PC-9 (cell line): ENCODE measurements at regions of chr4 and their contacts with region 1.

Region 1: DNA sequence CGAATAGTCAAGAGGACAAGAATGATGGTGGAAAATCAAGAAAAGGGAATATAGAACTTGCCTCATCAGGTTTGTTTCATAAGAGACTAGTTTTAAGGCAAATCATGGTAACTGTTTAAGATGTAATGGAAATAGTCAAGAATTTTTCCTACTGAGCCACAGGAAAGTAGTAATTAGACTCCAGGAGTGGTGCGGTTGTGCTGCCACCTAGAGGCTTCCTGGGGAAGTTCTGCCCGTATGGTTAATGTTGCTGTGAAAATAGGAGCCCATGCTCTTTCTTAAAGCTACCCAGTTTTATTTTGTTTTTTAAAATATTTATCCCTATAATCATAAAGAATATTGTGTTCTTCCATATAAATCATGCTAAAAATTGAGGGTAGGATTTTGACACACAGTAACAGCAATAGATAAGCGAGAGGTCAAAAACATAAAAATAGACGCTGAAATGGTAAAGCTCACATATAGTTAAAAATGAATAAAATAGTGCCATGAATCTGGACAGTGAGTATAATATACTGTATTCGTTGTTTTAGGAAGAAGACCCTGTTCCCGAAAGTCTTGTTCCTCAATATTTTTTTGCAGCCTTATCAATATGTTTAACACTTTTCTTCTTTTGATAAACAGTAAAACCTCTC is 87.0 kb downstream of the PHOX2B start:
- DNase-seq: peak in 1 of 2 experiments; percentile 63
- H3K4me3 ChIP-seq: no peak overlapping the region
- H3K27ac ChIP-seq: peak overlapping the region; percentile 31
- H3K4me1 ChIP-seq: peaks cover 25% of the 10 kb centered on the region
- H3K27me3 ChIP-seq: no peaks in the 10 kb centered on the region
- CTCF ChIP-seq: peak; percentile 92

Region 2: DNA sequence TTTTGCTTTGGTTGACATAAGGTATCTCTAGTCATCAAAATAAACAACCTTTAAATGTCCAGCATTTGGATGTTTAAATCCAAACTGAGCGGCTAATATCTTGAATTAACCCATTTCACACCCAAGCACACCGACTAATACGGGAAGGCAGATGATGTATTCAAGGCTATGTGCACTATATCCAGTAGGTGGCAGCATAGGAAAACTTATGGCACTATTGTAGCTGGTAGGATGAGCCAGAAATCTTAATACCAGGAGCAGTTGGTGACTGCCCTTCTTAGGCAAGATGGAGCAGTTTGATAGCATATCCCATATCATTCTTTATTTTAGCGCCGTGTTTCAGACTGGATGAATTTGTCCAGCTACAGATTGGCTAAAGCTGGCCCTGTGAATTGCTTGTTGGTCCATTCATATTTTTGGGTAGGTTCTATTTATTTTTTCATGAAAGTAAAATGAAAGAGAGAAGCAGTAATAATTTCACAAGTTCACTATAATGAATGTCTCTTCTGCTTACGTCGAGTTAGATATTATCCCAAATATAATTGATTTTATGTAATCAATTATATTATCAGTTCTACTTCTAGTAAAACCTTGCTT is 380.4 kb before region 1 on chr4:
- CTCF ChIA-PET with region 1: interaction called, 3 read pairs
- POLR2A ChIA-PET with region 1: interaction called, 3 read pairs
- intact Hi-C with region 1: loop called (anchors 1 kb)
- DNase-seq: peak; percentile 48 to 72
- H3K4me3 ChIP-seq: no peak overlapping the region
- H3K27ac ChIP-seq: no peak overlapping the region
- H3K4me1 ChIP-seq: peaks cover 23% of the 10 kb centered on the region
- H3K27me3 ChIP-seq: no peaks in the 10 kb centered on the region
- CTCF ChIP-seq: peak; percentile 91

Region 3: GRCh38 chr4:41432881-41433280 is 228.7 kb before region 1 on chr4:
- CTCF ChIA-PET with region 1: no interaction called
- POLR2A ChIA-PET with region 1: no interaction called
- intact Hi-C with region 1: loop called (anchors 5 kb)
- DNase-seq: peak; percentile 21 to 94
- H3K4me3 ChIP-seq: no peak overlapping the region
- H3K27ac ChIP-seq: peak overlapping the region; percentile 85
- H3K4me1 ChIP-seq: peaks cover 56% of the 10 kb centered on the region
- H3K27me3 ChIP-seq: no peaks in the 10 kb centered on the region
- CTCF ChIP-seq: no peak

Region 4: DNA sequence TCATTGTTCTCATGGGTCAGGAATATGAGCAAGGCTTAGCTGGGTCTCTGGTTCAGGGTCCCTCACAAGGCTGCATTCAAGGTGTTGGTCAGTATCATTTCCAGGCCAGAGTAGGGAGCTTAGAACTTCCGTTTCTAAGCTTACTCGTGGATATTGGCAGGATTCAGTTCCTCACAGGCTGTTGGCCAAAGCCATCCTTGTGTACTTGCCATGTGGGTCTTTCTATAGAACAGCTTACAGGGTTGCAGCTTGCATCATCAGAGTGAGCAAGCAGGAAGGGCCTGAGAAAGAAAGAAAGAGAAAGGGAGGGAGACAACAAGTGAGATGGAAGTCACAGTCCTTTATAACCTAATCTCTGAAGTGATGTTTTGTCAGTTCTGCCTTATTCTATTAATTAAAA is 128.7 kb before region 1 on chr4:
- CTCF ChIA-PET with region 1: no interaction called
- POLR2A ChIA-PET with region 1: no interaction called
- intact Hi-C with region 1: loop called (anchors 5 kb)
- DNase-seq: no peak
- H3K4me3 ChIP-seq: no peak overlapping the region
- H3K27ac ChIP-seq: peak overlapping the region; percentile 52
- H3K4me1 ChIP-seq: peaks cover 76% of the 10 kb centered on the region
- H3K27me3 ChIP-seq: no peaks in the 10 kb centered on the region
- CTCF ChIP-seq: no peak

Region 5: GRCh38 chr4:41725254-41725653 is 63.7 kb after region 1 on chr4:
- CTCF ChIA-PET with region 1: no interaction called
- POLR2A ChIA-PET with region 1: no interaction called
- intact Hi-C with region 1: no loop called
- DNase-seq: no peak
- H3K4me3 ChIP-seq: no peak overlapping the region
- H3K27ac ChIP-seq: no peak overlapping the region
- H3K4me1 ChIP-seq: no peaks in the 10 kb centered on the region
- H3K27me3 ChIP-seq: peaks cover 6% of the 10 kb centered on the region; the same call in 1 of the 2 replicates
- CTCF ChIP-seq: peak; percentile 24; the same call in 1 of the 2 replicates

Region 6: DNA sequence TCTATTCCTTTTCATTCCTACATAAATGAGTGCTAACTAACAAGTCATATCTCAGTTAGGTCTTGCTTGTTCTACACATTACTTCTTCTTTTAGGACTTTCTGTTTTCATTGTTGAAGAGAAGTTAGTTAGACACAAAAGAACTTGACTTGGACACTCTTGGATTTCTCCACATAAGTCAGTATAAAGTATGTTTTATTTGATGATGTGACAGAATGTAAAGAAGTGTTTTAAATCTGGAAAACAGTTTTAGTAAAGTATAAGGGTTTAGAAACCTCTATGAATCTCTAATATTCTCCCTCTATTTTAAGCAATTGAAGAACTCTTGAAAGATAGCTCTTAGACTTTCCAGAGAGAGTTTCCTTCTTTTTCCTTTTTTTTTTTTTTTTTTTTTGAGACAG is 235.1 kb after region 1 on chr4:
- CTCF ChIA-PET with region 1: interaction called, 20 read pairs
- POLR2A ChIA-PET with region 1: no interaction called
- intact Hi-C with region 1: no loop called
- DNase-seq: no peak
- H3K4me3 ChIP-seq: no peak overlapping the region
- H3K27ac ChIP-seq: no peak overlapping the region
- H3K4me1 ChIP-seq: 0 out of 2 replicates have a peak, but pooled peaks cover 9% of the 10 kb centered on the region
- H3K27me3 ChIP-seq: no peaks in the 10 kb centered on the region
- CTCF ChIP-seq: no peak